CD8-positive, alpha-beta T cell (primary cell): ENCODE measurements at regions of chr5 and their contacts with region 1.

Region 1: DNA sequence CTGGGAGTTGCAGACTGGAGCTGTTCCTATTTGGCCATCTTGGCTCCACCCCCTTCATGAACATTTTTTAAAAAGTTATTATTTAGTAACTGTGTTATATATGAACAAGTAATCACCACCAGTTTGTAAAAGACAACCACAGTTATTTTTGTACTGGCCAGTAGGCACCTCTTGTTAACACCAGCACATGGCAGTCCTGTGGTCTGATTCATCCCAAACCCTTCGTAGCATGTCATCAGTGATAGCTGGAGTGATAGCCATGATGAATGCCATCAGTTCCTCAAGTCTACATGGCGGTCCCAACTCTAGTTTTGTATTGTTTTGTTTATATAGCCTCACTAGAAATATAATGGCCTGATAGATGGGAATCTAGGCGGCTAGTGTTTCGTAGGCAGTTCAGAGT is 74.2 kb downstream of the CDC42SE2 start:
- DNase-seq: no peak
- ATAC-seq: peak; percentile 15
- H3K4me3 ChIP-seq: no peak overlapping the region
- H3K4me3 Mint-ChIP-seq: no peak overlapping the region
- H3K27ac ChIP-seq: peak overlapping the region in 1 of 2 experiments; percentile 82
- H3K27ac Mint-ChIP-seq: peak overlapping the region; percentile 72
- H3K4me1 ChIP-seq: peaks cover 44% of the 10 kb centered on the region
- H3K4me1 Mint-ChIP-seq: peaks cover 82% of the 10 kb centered on the region
- H3K27me3 ChIP-seq: no peaks in the 10 kb centered on the region
- H3K27me3 Mint-ChIP-seq: no peaks in the 10 kb centered on the region
- CTCF ChIP-seq: no peak

Region 2: DNA sequence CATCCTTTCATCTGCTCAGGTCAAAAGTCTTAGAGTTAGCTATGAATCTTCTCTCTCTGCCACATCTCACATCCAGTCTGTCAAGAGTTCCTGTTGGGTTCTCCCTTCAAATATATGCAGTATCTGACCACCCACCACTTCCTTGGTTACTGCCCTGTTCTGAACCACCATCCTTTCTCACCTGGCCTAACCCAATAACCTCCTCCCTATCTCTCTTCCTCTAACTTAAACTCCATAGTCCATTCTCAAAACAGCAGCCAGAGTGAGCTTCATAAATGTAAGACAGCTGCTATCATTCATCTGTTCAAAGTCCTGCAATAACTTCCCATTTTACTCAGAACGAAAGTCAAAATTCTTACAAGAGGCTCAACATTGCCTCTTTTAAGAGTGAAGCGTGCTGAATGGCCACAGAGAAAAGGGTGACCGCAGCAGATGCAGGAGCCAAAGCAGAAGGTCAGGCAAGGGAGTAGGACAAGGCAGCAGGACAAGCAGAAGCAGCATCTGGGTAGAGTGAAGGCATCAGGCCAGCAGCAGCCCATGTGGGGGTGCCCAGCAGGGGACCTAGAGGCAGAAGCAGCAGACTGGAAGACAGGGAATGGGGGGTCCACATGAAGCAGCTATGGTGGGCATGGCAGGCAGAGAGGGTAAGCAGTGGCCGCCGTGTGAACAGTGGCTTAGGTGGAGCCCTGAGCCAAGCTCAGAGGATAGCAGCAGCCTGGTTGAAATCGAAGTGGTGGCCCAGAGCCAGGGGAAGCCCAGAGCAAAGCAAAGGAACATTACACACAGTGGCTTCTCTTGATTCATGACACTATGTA is 113.5 kb before region 1 on chr5:
- CTCF ChIA-PET with region 1: no interaction called
- POLR2A ChIA-PET with region 1: no interaction called
- intact Hi-C with region 1: no loop called
- DNase-seq: peak in 3 of 9 experiments; percentile 5 to 53 (median 45)
- ATAC-seq: peak; percentile 40
- H3K4me3 ChIP-seq: no peak overlapping the region
- H3K4me3 Mint-ChIP-seq: no peak overlapping the region
- H3K27ac ChIP-seq: peak overlapping the region in 1 of 2 experiments; percentile 41
- H3K27ac Mint-ChIP-seq: no peak overlapping the region
- H3K4me1 ChIP-seq: peaks cover 22% of the 10 kb centered on the region
- H3K4me1 Mint-ChIP-seq: peaks cover 9% of the 10 kb centered on the region
- H3K27me3 ChIP-seq: no peaks in the 10 kb centered on the region
- H3K27me3 Mint-ChIP-seq: no peaks in the 10 kb centered on the region
- CTCF ChIP-seq: no peak

Region 3: GRCh38 chr5:131303537-131303936 is 34.5 kb before region 1 on chr5:
- CTCF ChIA-PET with region 1: no interaction called
- POLR2A ChIA-PET with region 1: no interaction called
- intact Hi-C with region 1: no loop called
- DNase-seq: no peak
- ATAC-seq: no peak
- H3K4me3 ChIP-seq: no peak overlapping the region
- H3K4me3 Mint-ChIP-seq: peak overlapping the region; percentile 3
- H3K27ac ChIP-seq: no peak overlapping the region
- H3K27ac Mint-ChIP-seq: peak overlapping the region; percentile 32
- H3K4me1 ChIP-seq: peaks cover 68% of the 10 kb centered on the region
- H3K4me1 Mint-ChIP-seq: peaks cover 74% of the 10 kb centered on the region
- H3K27me3 ChIP-seq: no peaks in the 10 kb centered on the region
- H3K27me3 Mint-ChIP-seq: no peaks in the 10 kb centered on the region
- CTCF ChIP-seq: no peak

Region 4: GRCh38 chr5:131322926-131323325 is 15.1 kb before region 1 on chr5:
- CTCF ChIA-PET with region 1: no interaction called
- POLR2A ChIA-PET with region 1: no interaction called
- intact Hi-C with region 1: loop called in 1 of 2 experiments (anchors 2 kb)
- DNase-seq: no peak
- ATAC-seq: no peak
- H3K4me3 ChIP-seq: no peak overlapping the region
- H3K4me3 Mint-ChIP-seq: peak overlapping the region; percentile 53
- H3K27ac ChIP-seq: peak overlapping the region in 1 of 2 experiments; percentile 3
- H3K27ac Mint-ChIP-seq: peak overlapping the region; percentile 66
- H3K4me1 ChIP-seq: peaks cover 56% of the 10 kb centered on the region
- H3K4me1 Mint-ChIP-seq: peaks cover 74% of the 10 kb centered on the region
- H3K27me3 ChIP-seq: no peaks in the 10 kb centered on the region
- H3K27me3 Mint-ChIP-seq: no peaks in the 10 kb centered on the region
- CTCF ChIP-seq: no peak